ENCODE measurements at regions of chr20 and their contacts with region 1.

Region 1: DNA sequence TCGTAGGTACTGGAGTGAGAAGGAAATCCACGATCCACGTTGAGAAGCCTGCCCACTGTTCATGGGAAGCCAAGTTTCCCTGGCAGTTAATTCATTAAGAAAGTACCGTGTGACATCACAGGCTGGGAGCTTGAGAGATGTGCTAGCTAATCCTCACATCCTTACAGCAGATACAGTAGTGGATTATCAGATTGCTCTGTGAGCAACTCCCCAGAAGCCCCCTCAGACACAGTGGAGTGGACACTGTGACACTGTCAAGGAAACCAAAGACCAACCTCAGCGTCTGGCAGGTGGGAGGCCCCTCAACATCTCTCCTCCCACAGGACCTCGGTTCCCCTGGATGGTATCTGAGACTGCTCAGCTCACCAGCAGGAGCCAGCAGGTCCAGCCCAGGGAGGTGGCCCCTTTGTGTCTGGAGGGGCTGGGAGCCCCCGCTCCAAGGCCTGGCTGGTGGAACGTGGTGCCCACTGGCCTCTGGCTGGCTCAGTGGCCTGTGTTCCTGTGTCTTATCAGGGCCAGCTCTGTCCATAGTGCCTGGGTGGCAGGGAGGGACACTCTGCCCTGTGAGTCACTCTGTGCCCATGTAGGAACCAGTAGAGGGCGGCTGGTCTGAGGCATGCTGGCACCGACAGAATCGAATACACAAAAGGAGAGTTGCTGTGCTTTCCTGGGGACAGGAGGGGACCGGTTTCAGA is 7.2 kb downstream of the PYGB start:
- DNase-seq: peak in 4 of 5 donors; percentile 72 to 87 (median 81)
- ATAC-seq: peak; percentile 90 to 92 (median 92)
- H3K4me3 ChIP-seq: peak overlapping the region in 2 of 12 donors; percentile 6 to 9
- H3K27ac ChIP-seq: peak overlapping the region; percentile 64 to 99 (median 96)
- H3K4me1 ChIP-seq: peaks cover 0 to 86% (median 51%) of the 10 kb centered on the region in 12 donors
- H3K27me3 ChIP-seq: no peaks in the 10 kb centered on the region
- CTCF ChIP-seq: peak in 5 of 12 donors; percentile 6 to 24 (median 11)
- POLR2A ChIP-seq: peak in 1 of 2 donors; percentile 8

Region 2: GRCh38 chr20:24891546-24892393 is 363.4 kb before region 1 on chr20:
- intact Hi-C with region 1: no loop called
- DNase-seq: no peak
- ATAC-seq: peak in 1 of 4 donors; percentile 13
- H3K4me3 ChIP-seq: no peak overlapping the region
- H3K27ac ChIP-seq: no peak overlapping the region
- H3K4me1 ChIP-seq: no peaks in the 10 kb centered on the region
- H3K27me3 ChIP-seq: no peaks in the 10 kb centered on the region
- CTCF ChIP-seq: no peak
- POLR2A ChIP-seq: no peak

Region 3: GRCh38 chr20:25227317-25227831 is 27.8 kb before region 1 on chr20:
- intact Hi-C with region 1: loop called in 1 of 10 experiments (anchors 2 kb)
- DNase-seq: peak in 2 of 5 donors; percentile 67 to 70
- ATAC-seq: peak; percentile 47 to 73 (median 55)
- H3K4me3 ChIP-seq: no peak overlapping the region
- H3K27ac ChIP-seq: peak overlapping the region; percentile 74 to 96 (median 86)
- H3K4me1 ChIP-seq: peaks cover 10 to 80% (median 41%) of the 10 kb centered on the region in 12 donors
- H3K27me3 ChIP-seq: no peaks in the 10 kb centered on the region
- CTCF ChIP-seq: no peak
- POLR2A ChIP-seq: no peak

Region 4: GRCh38 chr20:25273541-25274358 is 18.6 kb after region 1 on chr20:
- intact Hi-C with region 1: loop called in 3 of 10 experiments (anchors 1 to 2 kb)
- DNase-seq: peak; percentile 8 to 50 (median 39)
- ATAC-seq: peak in 1 of 4 donors; percentile 33
- H3K4me3 ChIP-seq: no peak overlapping the region
- H3K27ac ChIP-seq: peak overlapping the region in 11 of 12 donors; percentile 29 to 75 (median 58)
- H3K4me1 ChIP-seq: peaks cover 0 to 77% (median 34%) of the 10 kb centered on the region in 12 donors
- H3K27me3 ChIP-seq: no peaks in the 10 kb centered on the region
- CTCF ChIP-seq: no peak
- POLR2A ChIP-seq: no peak